BJ (cell line): ENCODE measurements at regions of chr13 and their contacts with region 1.

Region 1: DNA sequence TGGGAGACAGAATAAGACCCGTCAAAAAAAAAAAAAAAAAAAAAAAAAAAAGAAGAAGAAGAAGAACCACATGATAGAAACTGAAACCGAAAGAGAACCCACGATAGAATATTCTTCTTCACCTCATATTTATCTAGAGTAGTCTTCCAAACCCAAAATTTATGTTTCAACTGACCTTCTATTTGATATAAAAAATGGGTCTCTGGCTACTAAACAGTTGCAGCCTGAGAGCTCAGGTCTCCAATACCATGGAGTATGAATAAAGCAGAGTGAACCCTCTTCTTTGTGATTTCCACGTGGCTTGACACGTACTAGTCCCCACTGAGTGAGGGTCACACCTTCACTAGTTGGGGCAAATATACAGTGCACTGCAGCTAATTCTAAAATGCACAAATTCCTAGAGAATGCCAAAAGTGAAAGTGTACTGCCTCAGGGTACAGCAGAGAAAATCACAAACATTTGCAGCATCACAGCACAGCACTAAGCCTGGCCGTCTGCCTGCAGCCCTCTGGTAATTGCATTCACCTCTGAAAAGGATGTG is 30.8 kb upstream of the RFC3 start:
- DNase-seq: peak; percentile 10
- H3K4me3 ChIP-seq: peak overlapping the region; percentile 19; the same call in 1 of the 2 replicates
- H3K27me3 ChIP-seq: no peaks in the 10 kb centered on the region
- CTCF ChIP-seq: no peak

Region 2: GRCh38 chr13:33799950-33800592 is 12.9 kb after region 1 on chr13:
- CTCF ChIA-PET with region 1: interaction called, 17 read pairs
- POLR2A ChIA-PET with region 1: no interaction called
- DNase-seq: no peak
- H3K4me3 ChIP-seq: no peak overlapping the region
- H3K27me3 ChIP-seq: no peaks in the 10 kb centered on the region
- CTCF ChIP-seq: peak; percentile 64